IMR-90 (cell line): ENCODE measurements at regions of chr5 and their contacts with region 1.

Region 1: GRCh38 chr5:72076621-72077300 is 30.5 kb upstream of the MAP1B start:
- DNase-seq: no peak
- ATAC-seq: no peak
- H3K4me3 ChIP-seq: no peak overlapping the region
- H3K27ac ChIP-seq: no peak overlapping the region
- H3K4me1 ChIP-seq: no peaks in the 10 kb centered on the region
- H3K27me3 ChIP-seq: peaks cover 9% of the 10 kb centered on the region; the same call in 1 of the 2 replicates
- CTCF ChIP-seq: no peak
- POLR2A ChIP-seq: no peak
- RAD21 ChIP-seq: no peak

Region 2: DNA sequence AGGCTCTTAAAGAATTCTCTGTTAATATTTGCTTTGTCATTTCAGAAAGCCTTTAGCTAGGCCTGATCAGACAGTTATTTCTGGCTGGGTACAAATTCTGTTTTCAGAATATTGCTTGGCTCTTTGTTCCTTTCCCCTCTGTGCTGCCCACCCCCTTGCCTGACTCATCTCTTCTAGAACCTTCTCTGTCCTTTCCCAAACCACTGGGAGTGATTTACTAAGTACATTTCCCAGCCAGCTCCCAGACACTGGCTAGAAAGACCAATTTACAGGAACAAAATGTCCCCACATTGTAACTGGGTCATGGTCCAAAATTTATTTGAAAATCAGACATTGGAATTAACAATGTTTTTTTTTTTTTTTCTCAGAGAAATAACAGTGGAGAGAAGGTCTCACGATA is 102.6 kb before region 1 on chr5:
- CTCF ChIA-PET with region 1: no interaction called
- POLR2A ChIA-PET with region 1: no interaction called
- dilution Hi-C with region 1: no loop called
- in situ Hi-C with region 1: no loop called
- intact Hi-C with region 1: no loop called
- DNase-seq: no peak
- ATAC-seq: no peak
- H3K4me3 ChIP-seq: no peak overlapping the region
- H3K27ac ChIP-seq: no peak overlapping the region
- H3K4me1 ChIP-seq: no peaks in the 10 kb centered on the region
- H3K27me3 ChIP-seq: peaks cover 26% of the 10 kb centered on the region
- CTCF ChIP-seq: no peak
- POLR2A ChIP-seq: no peak
- RAD21 ChIP-seq: no peak

Region 3: DNA sequence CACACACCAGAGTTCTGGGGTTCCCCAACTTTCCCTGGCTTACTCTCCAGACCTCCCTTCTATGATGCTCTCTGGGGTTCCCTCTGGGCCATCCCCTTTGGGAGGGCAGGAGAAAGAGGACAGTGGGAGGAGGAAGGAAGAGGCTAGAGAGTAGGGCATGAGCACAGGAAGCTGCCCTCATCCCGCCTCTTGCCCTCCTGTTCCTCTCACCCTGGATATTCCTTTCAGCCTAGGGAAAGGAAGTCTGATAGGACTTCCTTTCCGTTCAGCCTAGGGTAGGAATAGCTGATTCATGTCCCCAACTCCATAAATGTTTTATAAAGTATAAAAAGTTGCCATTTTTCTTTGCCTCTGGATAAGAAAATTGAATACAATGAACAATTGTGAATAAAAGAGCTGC is 37.9 kb after region 1 on chr5:
- CTCF ChIA-PET with region 1: no interaction called
- POLR2A ChIA-PET with region 1: no interaction called
- dilution Hi-C with region 1: no loop called
- in situ Hi-C with region 1: no loop called
- intact Hi-C with region 1: loop called (anchors 1 kb)
- DNase-seq: no peak
- ATAC-seq: no peak
- H3K4me3 ChIP-seq: no peak overlapping the region
- H3K27ac ChIP-seq: no peak overlapping the region
- H3K4me1 ChIP-seq: peaks cover 10% of the 10 kb centered on the region
- H3K27me3 ChIP-seq: no peaks in the 10 kb centered on the region
- CTCF ChIP-seq: no peak
- POLR2A ChIP-seq: no peak
- RAD21 ChIP-seq: no peak